Breast epithelium (tissue), 4 donors: ENCODE measurements at regions of chr6 and their contacts with region 1.

Region 1: GRCh38 chr6:108145639-108146038 is 20.2 kb upstream of the NR2E1 start:
- DNase-seq: no peak
- H3K4me3 ChIP-seq: no peak overlapping the region
- H3K27ac ChIP-seq: no peak overlapping the region
- H3K4me1 ChIP-seq: no peaks in the 10 kb centered on the region
- H3K27me3 ChIP-seq: peaks cover 0 to 12% of the 10 kb centered on the region in 2 donors
- CTCF ChIP-seq: no peak
- POLR2A ChIP-seq: no peak

Region 2: DNA sequence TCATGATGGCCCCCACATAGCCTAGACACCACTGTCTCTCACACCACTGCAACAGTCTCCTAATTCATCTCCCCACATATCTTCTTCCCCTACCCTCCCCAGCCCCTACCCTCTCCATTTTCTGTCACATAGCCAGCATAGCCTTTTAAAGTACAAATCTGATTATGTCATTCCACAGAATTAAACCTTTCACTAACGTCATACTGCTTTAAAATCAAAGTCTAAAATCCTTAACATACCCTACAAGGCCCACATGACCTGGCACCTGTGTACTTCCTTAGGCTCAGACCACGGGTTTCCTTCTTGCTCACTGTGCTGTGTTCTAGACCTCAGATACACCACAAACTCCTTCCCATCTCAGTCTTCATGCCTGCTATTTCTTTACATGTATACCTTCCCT is 77.0 kb before region 1 on chr6:
- intact Hi-C with region 1: loop called (anchors 2 kb)
- DNase-seq: no peak
- H3K4me3 ChIP-seq: no peak overlapping the region
- H3K27ac ChIP-seq: no peak overlapping the region
- H3K4me1 ChIP-seq: peaks cover 0 to 5% of the 10 kb centered on the region in 2 donors
- H3K27me3 ChIP-seq: no peaks in the 10 kb centered on the region
- CTCF ChIP-seq: no peak
- POLR2A ChIP-seq: no peak

Region 3: GRCh38 chr6:108113557-108114519 is 31.8 kb before region 1 on chr6:
- intact Hi-C with region 1: loop called (anchors 1 kb)
- DNase-seq: no peak
- H3K4me3 ChIP-seq: peak overlapping the region in 2 of 3 donors; percentile 19 to 53
- H3K27ac ChIP-seq: no peak overlapping the region
- H3K4me1 ChIP-seq: no peaks in the 10 kb centered on the region
- H3K27me3 ChIP-seq: peaks cover 0 to 32% of the 10 kb centered on the region in 2 donors
- CTCF ChIP-seq: peak; percentile 49 to 63 (median 58)
- POLR2A ChIP-seq: no peak

Region 4: DNA sequence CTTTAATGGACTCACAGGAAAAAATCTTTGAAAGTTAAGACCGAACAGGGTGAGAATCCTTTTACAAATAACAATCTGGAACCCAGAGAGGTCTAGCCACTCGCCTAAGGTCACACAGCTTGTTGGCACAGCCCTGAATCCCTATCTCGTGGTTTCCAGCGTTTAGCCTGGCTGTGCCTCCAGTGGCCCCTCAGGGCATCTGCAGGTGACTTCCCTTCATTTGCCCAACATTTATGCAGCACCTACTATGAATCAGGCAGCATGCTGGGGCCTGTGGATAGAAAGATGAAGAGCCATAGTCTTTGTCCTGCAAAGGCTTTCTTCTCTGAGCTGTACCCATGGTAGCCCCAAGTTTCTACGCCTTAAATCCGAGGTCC is 17.6 kb after region 1 on chr6:
- intact Hi-C with region 1: loop called (anchors 1 kb)
- DNase-seq: no peak
- H3K4me3 ChIP-seq: no peak overlapping the region
- H3K27ac ChIP-seq: no peak overlapping the region
- H3K4me1 ChIP-seq: peaks cover 7 to 28% of the 10 kb centered on the region in 2 donors
- H3K27me3 ChIP-seq: peaks cover 13 to 100% of the 10 kb centered on the region in 2 donors
- CTCF ChIP-seq: no peak
- POLR2A ChIP-seq: no peak